Activated CD4-positive, alpha-beta memory T cell treated with anti-CD3 and anti-CD28 coated beads for 36 hours (primary cell): ENCODE measurements at regions of chr12 and their contacts with region 1.

Region 1: DNA sequence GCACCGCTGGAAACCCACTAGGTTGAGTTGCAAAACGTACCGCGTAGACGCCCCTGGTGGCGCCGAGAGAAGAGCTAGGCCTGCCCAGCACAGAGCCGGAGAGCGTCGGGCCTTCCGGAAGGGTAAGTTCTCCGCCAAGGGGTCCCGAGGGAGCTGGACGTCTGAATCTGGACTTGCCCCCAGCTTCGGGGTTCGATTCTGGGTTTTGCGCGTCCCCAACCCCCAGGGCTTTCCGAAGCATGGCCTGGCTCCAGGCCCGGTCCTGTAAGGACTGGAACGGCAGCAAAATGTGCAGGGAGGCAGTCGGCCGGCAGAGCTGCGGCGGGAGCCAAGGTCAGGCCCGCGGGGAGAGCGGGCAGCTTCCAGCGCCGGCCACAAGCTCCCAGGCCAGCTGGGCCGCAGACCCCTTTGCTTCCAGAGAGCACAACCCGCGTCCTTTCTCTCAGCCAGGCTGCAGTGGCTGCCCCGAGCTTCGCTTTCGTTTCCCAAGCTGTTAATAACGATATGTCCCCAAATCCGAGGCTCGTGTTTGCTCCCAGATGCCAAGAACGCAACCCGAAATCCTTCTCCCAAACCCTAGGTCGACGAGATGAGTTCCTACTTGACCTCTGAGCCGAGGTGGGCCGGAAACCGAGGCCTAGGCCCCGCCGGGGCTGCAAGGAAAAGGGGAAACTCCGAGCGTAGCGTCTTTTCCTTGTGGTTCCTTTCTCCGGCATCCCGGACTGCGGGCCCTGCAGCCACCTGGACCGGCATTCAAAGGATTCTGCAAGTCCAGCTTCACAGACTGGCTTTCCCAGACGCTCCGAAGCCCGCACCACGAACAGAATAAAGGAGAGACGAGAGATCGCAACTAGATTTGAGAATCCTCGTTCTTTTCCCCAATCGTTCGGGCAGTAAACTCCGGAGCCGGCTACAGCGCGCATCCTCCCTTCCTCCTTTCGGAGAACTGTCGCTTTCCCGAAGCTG is 3.2 kb upstream of the TBX5 start:
- DNase-seq: no peak
- H3K4me3 Mint-ChIP-seq: peak overlapping the region; percentile 20
- H3K27ac Mint-ChIP-seq: no peak overlapping the region
- H3K4me1 Mint-ChIP-seq: peaks cover 15% of the 10 kb centered on the region
- H3K27me3 Mint-ChIP-seq: peaks cover 78% of the 10 kb centered on the region

Region 2: DNA sequence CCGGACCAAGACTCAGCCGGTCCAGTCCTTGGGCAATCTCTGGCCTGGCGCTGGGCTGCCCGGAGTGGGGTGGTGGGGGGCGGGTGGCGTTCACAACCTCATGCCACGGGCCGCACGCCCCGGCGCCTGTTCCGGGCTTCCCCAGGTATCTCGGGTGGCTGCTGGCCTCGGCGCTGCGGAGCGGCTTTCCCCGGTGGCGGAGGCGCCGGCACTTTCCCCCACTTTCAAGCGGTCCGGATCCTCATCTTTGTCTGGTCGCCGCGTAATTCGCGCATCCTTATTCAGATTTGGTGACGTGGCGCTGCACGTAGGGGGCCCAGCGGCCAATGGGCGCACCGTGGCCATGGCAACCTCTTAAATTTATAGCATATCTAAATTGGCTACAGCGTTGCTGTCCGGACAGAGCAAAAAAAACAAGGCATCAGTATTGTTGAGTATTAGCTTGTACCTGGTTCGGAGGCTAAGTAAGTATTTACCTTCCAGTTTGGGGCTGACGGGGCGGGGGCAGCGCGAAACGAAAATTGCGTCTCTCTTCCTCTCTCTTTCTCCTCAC is 937.5 kb before region 1 on chr12 and contains the start of gene LHX5:
- CTCF ChIA-PET with region 1: no interaction called
- POLR2A ChIA-PET with region 1: no interaction called
- intact Hi-C with region 1: loop called (anchors 5 kb)
- DNase-seq: no peak
- H3K4me3 Mint-ChIP-seq: no peak within 1 kb of the TSS
- H3K27ac Mint-ChIP-seq: no peak within 1 kb of the TSS
- H3K4me1 Mint-ChIP-seq: peaks cover 13% of the 10 kb centered on the region
- H3K27me3 Mint-ChIP-seq: peaks cover 73% of the 10 kb centered on the region
- total RNA-seq, gene LHX5: not detected

Region 3: GRCh38 chr12:114440270-114441038 is 31.3 kb after region 1 on chr12:
- CTCF ChIA-PET with region 1: no interaction called
- POLR2A ChIA-PET with region 1: no interaction called
- intact Hi-C with region 1: loop called (anchors 2 kb)
- DNase-seq: no peak
- H3K4me3 Mint-ChIP-seq: no peak overlapping the region
- H3K27ac Mint-ChIP-seq: no peak overlapping the region
- H3K4me1 Mint-ChIP-seq: no peaks in the 10 kb centered on the region
- H3K27me3 Mint-ChIP-seq: peaks cover 74% of the 10 kb centered on the region

Region 4: GRCh38 chr12:114473717-114474116 is 64.5 kb after region 1 on chr12:
- CTCF ChIA-PET with region 1: no interaction called
- POLR2A ChIA-PET with region 1: no interaction called
- intact Hi-C with region 1: no loop called
- DNase-seq: no peak
- H3K4me3 Mint-ChIP-seq: no peak overlapping the region
- H3K27ac Mint-ChIP-seq: no peak overlapping the region
- H3K4me1 Mint-ChIP-seq: no peaks in the 10 kb centered on the region
- H3K27me3 Mint-ChIP-seq: peaks cover 20% of the 10 kb centered on the region

Region 5: GRCh38 chr12:114668151-114668885 is 259.1 kb after region 1 on chr12:
- CTCF ChIA-PET with region 1: no interaction called
- POLR2A ChIA-PET with region 1: no interaction called
- intact Hi-C with region 1: loop called (anchors 5 kb)
- DNase-seq: peak; percentile 53
- H3K4me3 Mint-ChIP-seq: no peak overlapping the region
- H3K27ac Mint-ChIP-seq: no peak overlapping the region
- H3K4me1 Mint-ChIP-seq: peaks cover 5% of the 10 kb centered on the region
- H3K27me3 Mint-ChIP-seq: peaks cover 73% of the 10 kb centered on the region